HepG2 (cell line): ENCODE measurements at regions of chr20 and their contacts with region 1.

Region 1: DNA sequence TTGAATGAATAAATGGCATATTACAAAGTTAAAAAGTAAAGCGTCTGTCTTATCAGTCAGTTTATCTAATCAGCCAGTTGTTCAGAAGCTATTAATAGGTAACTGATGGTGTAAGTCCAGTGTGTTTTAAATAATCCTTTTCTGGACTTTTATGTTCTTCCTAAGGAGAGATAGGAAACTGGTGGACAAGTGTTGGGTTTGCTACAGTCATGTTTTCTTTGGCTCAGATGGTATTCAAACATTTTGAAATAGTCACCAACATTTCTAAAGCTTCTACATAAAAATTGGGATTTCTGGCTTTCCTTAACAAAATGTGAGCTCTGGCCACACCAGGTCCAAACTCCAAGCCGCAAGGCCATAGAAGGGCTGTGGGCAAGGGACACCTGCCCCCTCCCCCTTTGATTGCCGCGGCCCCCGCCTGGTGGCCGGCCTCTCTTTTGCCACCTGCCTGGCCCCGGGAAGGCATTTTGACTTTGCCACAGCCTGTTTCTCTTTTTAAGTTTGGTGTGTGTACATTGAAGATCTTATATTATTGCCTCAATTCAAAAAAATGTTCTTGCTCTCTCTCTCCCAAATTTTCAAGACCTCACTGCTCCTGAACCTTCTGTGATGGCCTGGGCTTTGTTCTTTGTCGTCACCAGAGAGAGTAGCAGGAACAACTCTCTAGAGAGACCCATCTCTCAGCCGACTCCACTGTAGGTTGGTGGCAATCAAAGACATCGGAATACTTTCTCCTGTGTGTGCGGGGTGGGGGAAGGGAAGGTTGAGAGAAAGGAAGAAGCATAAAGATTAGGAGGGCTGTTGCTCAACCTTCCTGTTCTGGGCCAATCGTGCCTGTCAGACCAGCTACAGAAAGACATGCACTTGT is 84.0 kb upstream of the ZNF217 start:
- DNase-seq: peak; percentile 92
- ATAC-seq: peak; percentile 97
- H3K4me3 ChIP-seq: peak overlapping the region; percentile 45 to 70 (median 67)
- H3K27ac ChIP-seq: peak overlapping the region; percentile 90
- H3K4me1 ChIP-seq: peaks cover 62% of the 10 kb centered on the region
- H3K27me3 ChIP-seq: no peaks in the 10 kb centered on the region
- CTCF ChIP-seq: peak; percentile 77
- EP300 ChIP-seq: peak; percentile 7 to 80; a peak in 3 of 4 replicates
- POLR2A ChIP-seq: peak in 1 of 2 experiments; percentile 47; a peak in 2 of 4 replicates
- RAD21 ChIP-seq: peak; percentile 91

Region 2: DNA sequence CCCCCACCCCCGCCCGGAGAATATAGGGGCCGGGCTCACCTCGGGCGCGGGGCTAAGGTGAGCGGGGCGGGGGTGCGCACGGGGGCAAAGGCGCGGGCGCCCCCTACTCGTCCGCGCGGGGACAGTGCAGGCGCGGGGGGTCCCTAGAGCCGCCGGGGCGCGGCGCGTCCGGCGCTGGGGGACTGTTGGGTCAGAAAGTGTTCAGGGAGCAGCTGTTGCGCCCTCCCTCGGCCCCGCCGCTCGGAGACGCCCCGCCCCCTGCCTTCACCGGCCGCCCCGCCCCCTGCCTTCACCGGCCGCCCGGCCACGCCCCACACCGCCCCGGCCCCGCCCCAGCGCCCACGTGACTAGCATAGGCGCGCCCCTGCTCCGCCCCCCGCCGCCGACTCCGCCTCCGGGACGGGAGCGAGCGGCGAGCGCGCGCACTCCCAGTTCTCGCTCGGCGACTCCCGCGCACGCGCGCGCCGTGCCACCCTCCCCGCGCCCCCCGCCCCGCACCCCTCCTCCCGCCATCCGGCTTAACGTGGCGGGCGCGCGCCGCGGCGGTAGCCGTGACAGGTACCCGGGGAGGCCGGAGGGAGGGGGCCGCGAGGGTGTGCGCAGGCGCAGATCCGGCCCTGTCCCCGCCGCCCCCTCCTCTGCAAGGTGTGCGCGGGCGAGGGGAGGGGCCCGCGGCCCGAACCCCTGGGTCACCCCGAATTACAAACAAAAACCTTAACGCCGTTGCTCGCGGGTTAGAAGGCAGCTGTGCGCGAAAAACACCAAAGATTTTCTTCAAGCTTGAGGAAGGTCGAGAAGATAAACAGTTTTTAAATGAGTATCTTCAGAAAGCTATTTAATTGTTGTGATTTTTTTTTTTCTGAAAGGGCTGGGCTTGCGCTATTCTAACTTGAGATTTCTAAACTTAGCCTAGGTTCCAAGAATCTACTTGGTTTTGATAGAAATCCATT is 83.3 kb before region 1 on chr20:
- CTCF ChIA-PET with region 1: no interaction called
- POLR2A ChIA-PET with region 1: interaction called, 33 read pairs
- in situ Hi-C with region 1: no loop called
- intact Hi-C with region 1: loop called (anchors 1 kb)
- DNase-seq: peak; percentile 89
- ATAC-seq: peak; percentile 88
- H3K4me3 ChIP-seq: peak overlapping the region; percentile 89 to 98 (median 90)
- H3K27ac ChIP-seq: peak overlapping the region; percentile 87
- H3K4me1 ChIP-seq: peaks cover 43% of the 10 kb centered on the region
- H3K27me3 ChIP-seq: no peaks in the 10 kb centered on the region; a peak in 1 of 5 replicates
- CTCF ChIP-seq: peak; percentile 88
- EP300 ChIP-seq: peak in 1 of 2 experiments; percentile 14; a peak in 1 of 4 replicates
- POLR2A ChIP-seq: peak; percentile 52 to 60
- RAD21 ChIP-seq: peak; percentile 91

Region 3: GRCh38 chr20:53652090-53652858 is 25.4 kb before region 1 on chr20:
- CTCF ChIA-PET with region 1: no interaction called
- POLR2A ChIA-PET with region 1: interaction called, 12 read pairs
- in situ Hi-C with region 1: no loop called
- intact Hi-C with region 1: no loop called
- DNase-seq: peak; percentile 97
- ATAC-seq: peak; percentile 95
- H3K4me3 ChIP-seq: peak overlapping the region; percentile 8 to 54 (median 39); a peak in 5 of 6 replicates
- H3K27ac ChIP-seq: peak overlapping the region; percentile 93
- H3K4me1 ChIP-seq: peaks cover 71% of the 10 kb centered on the region
- H3K27me3 ChIP-seq: no peaks in the 10 kb centered on the region
- CTCF ChIP-seq: no peak
- EP300 ChIP-seq: peak; percentile 80 to 96; a peak in 3 of 4 replicates
- POLR2A ChIP-seq: peak in 1 of 2 experiments; percentile 40; a peak in 2 of 4 replicates
- RAD21 ChIP-seq: 0 out of 2 replicates have a peak, but pooled peaks have one; percentile 25

Region 4: DNA sequence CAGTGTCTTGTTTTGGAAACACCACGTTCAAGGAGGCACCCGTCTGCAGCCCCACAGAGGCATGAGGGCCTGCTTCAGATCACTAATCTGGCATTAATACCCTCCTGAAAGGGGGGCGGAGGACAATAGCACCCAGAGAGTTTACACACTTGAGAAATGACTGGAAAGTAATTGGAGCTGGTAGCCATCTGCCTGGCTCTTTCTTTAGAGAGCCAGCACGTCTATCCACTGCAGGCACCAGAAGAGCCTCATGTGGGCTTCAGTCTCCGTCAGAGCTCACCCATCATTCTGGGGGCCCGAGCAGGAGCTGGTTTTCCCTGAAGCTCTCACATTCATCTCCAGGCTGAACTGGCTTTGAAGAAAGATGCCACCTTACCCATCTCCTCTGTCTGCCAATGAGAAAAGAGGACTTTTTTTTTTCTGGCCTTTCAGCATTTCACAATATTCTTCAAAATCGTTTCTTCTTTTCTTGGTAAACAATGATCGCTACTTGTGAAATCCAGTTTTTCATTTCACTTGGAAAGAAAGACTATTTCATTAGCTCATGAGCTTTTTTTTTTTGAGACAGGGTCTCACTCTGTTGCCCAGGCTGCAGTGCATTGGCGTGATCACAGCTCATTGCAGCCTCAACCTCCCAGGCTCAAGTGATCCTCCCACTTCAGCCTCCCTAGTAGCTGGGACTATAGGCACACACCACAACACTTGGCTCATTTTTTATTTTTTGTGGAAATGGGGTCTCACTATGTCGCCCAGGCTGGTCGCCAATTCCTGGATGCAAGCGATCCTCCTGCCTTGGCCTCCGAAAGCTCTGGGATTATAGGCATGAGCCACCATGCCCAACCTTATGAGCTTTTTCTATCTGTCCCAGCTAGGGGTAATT is 40.7 kb after region 1 on chr20:
- CTCF ChIA-PET with region 1: no interaction called
- POLR2A ChIA-PET with region 1: no interaction called
- in situ Hi-C with region 1: no loop called
- intact Hi-C with region 1: no loop called
- DNase-seq: no peak
- ATAC-seq: no peak
- H3K4me3 ChIP-seq: no peak overlapping the region
- H3K27ac ChIP-seq: no peak overlapping the region
- H3K4me1 ChIP-seq: peaks cover 11% of the 10 kb centered on the region; the same call in 1 of the 2 replicates
- H3K27me3 ChIP-seq: no peaks in the 10 kb centered on the region
- CTCF ChIP-seq: no peak
- EP300 ChIP-seq: no peak
- POLR2A ChIP-seq: no peak
- RAD21 ChIP-seq: no peak

Region 5: DNA sequence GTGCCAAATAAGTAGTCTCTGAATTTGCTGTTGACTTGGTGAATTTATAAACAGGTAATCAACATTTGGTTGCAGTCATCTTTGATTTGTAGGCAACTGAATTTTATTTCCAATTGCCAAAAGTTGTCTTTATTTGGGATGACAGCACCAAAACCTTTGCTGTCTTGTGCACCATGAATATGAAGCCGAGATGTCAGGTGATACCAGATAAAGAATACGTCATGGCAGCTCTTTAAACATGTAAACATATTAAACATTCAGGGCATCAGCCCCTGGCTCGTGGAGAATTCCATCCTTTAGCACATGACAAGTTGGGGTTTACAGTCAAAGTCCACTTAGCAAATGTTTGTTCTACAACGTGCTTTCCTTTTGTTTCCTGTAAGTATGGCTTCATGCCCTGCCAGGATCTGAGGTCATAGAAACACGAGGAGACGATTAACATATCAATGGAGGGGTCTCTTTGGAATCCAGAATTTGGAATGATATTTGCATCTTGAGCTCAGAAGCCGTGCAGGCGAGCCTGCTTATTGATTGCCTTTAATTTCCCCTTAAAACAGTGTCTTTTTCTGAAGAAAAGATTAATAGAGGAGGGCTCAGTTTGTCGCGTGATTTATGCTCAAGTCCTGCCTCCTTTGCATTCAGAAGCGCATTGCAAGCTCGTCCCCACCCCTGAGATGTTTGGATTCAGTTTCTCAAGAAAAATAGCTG is 86.2 kb after region 1 on chr20:
- CTCF ChIA-PET with region 1: no interaction called
- POLR2A ChIA-PET with region 1: interaction called, 18 read pairs
- in situ Hi-C with region 1: no loop called
- intact Hi-C with region 1: no loop called
- DNase-seq: peak; percentile 100
- ATAC-seq: peak; percentile 95
- H3K4me3 ChIP-seq: no peak overlapping the region; a peak in 1 of 6 replicates
- H3K27ac ChIP-seq: peak overlapping the region; percentile 89
- H3K4me1 ChIP-seq: peaks cover 77% of the 10 kb centered on the region
- H3K27me3 ChIP-seq: no peaks in the 10 kb centered on the region
- CTCF ChIP-seq: no peak
- EP300 ChIP-seq: peak; percentile 95 to 99; a peak in 3 of 4 replicates
- POLR2A ChIP-seq: peak; percentile 26 to 48; a peak in 2 of 4 replicates
- RAD21 ChIP-seq: 0 out of 2 replicates have a peak, but pooled peaks have one; percentile 15

Region 6: DNA sequence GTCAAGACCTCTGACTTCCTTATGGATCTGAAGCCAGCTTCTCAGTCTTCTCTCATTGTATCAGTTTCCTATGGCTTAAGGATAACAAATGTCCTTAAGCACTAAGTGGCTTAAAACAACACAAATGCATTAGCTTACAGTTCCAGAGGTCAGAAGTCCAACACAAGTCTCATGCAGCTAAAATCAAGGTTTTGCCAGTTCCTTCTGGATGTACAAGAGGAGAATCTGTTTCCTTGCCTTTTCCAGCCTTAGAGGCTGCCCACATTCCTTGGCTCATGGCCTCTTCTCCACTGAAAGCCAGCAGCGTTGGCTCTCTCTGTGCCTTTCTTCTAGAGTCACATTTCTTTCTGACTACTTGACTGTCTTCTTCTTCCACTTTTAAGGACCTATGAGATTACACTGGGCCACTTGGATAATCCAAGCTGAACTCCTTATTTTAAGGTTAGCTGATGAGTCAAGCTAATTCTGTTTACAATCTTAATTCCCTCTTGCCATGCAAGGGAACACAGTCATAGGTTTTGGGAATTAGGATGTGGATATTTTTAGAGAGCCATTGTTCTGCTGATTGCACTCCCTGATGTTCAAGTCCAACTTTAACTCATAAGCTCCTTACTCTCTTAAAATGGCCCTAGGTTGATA is 213.7 kb after region 1 on chr20:
- CTCF ChIA-PET with region 1: no interaction called
- POLR2A ChIA-PET with region 1: no interaction called
- in situ Hi-C with region 1: no loop called
- intact Hi-C with region 1: no loop called
- DNase-seq: no peak
- ATAC-seq: no peak
- H3K4me3 ChIP-seq: no peak overlapping the region
- H3K27ac ChIP-seq: no peak overlapping the region
- H3K4me1 ChIP-seq: peaks cover 39% of the 10 kb centered on the region
- H3K27me3 ChIP-seq: peaks cover 0 to 3% of the 10 kb centered on the region in 2 experiments; a peak in 1 of 5 replicates
- CTCF ChIP-seq: no peak
- EP300 ChIP-seq: no peak
- POLR2A ChIP-seq: no peak
- RAD21 ChIP-seq: no peak

Region 7: GRCh38 chr20:53915446-53916172 is 237.9 kb after region 1 on chr20:
- CTCF ChIA-PET with region 1: no interaction called
- POLR2A ChIA-PET with region 1: interaction called, 10 read pairs
- in situ Hi-C with region 1: no loop called
- intact Hi-C with region 1: loop called (anchors 1 kb)
- DNase-seq: peak; percentile 84
- ATAC-seq: peak; percentile 92
- H3K4me3 ChIP-seq: peak overlapping the region; percentile 73 to 88 (median 80)
- H3K27ac ChIP-seq: peak overlapping the region; percentile 17
- H3K4me1 ChIP-seq: peaks cover 48% of the 10 kb centered on the region
- H3K27me3 ChIP-seq: peaks cover 0 to 2% of the 10 kb centered on the region in 2 experiments; a peak in 1 of 5 replicates
- CTCF ChIP-seq: peak; percentile 96
- EP300 ChIP-seq: no peak; a peak in 1 of 4 replicates
- POLR2A ChIP-seq: no peak
- RAD21 ChIP-seq: peak; percentile 83